ENCODE measurements at regions of chr19 and their contacts with region 1.

Region 1: DNA sequence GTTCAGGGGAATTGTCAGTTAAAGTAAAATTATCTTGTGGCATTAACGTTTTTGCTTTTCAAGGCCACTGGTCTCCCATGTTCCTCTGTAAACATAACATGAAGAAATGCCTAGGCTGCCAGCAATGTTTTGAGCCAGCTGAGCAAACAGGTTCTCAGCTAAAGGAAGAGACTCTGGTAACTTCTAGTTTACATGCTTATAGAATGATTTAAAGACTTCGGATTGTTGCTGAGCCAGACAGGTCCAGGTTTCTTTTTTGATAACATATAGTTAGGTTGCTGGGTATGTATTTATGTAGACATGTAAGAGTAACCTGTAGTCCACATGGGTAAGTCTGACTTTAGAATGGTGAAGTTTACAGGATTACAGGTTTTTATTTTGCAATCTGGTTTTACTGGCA is 35.7 kb downstream of the ZNF493 start:
- DNase-seq: no peak
- H3K4me3 Mint-ChIP-seq: no peak overlapping the region
- H3K27ac Mint-ChIP-seq: no peak overlapping the region
- H3K4me1 Mint-ChIP-seq: no peaks in the 10 kb centered on the region
- H3K27me3 Mint-ChIP-seq: no peaks in the 10 kb centered on the region
- CTCF ChIP-seq: no peak

Region 2: GRCh38 chr19:21454901-21455300 is 22.3 kb after region 1 on chr19:
- CTCF ChIA-PET with region 1: no interaction called
- intact Hi-C with region 1: loop called (anchors 1 kb)
- DNase-seq: no peak
- H3K4me3 Mint-ChIP-seq: no peak overlapping the region
- H3K27ac Mint-ChIP-seq: no peak overlapping the region
- H3K4me1 Mint-ChIP-seq: no peaks in the 10 kb centered on the region
- H3K27me3 Mint-ChIP-seq: no peaks in the 10 kb centered on the region
- CTCF ChIP-seq: no peak

Region 3: GRCh38 chr19:21474671-21475181 is 42.1 kb after region 1 on chr19:
- CTCF ChIA-PET with region 1: no interaction called
- intact Hi-C with region 1: no loop called
- DNase-seq: no peak
- H3K4me3 Mint-ChIP-seq: no peak overlapping the region
- H3K27ac Mint-ChIP-seq: no peak overlapping the region
- H3K4me1 Mint-ChIP-seq: no peaks in the 10 kb centered on the region
- H3K27me3 Mint-ChIP-seq: no peaks in the 10 kb centered on the region
- CTCF ChIP-seq: no peak